A673 (cell line): ENCODE measurements at regions of chr10 and their contacts with region 1.

Region 1: GRCh38 chr10:48215488-48216204 is 58.9 kb downstream of the FRMPD2 start:
- DNase-seq: peak; percentile 75
- H3K4me3 ChIP-seq: no peak overlapping the region
- H3K27ac ChIP-seq: no peak overlapping the region
- H3K4me1 ChIP-seq: peaks cover 5% of the 10 kb centered on the region
- H3K27me3 ChIP-seq: no peaks in the 10 kb centered on the region
- CTCF ChIP-seq: peak; percentile 89

Region 2: DNA sequence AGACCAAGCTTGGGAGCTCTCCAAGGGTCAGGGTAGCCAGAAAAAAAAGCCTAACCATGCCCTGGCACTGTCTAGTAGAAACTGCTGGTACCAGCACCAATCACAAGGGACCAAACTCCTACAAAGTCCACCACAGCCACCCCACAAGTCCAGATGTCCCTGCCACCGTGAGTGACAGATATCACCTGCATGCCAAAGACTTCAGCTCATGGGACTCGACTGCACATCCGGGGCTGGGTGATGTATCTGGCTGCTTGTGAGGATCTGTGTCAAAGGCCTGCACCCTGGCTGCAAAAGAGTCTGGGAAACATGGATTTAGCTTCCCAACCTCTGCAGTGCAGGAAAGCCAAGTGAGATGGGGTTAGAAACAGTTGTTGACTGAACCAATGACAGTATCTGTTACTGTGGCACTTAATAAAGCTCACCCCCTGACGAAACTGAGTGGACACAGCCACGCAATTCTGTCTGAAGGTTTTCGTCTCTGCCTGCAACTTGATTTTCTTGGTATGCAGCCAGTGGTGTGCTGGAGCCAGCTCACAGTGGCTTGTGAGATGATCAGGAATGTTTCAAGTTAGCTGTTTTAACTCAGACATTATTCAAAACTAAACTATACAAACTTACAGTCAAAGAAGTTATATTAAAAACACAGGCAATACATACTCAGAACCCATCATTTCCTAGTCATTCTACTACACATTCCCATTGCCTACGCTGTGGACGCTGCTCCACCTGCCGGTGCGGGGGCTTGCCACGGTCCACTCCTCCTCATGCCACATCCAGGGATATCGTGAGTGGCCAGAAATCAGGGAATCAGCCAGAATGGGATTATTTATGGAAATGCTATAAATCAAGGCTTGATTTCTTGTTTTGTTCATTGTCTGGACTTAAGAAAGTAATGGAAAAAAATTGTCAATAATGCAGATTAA is 840.8 kb before region 1 on chr10:
- CTCF ChIA-PET with region 1: no interaction called
- POLR2A ChIA-PET with region 1: no interaction called
- intact Hi-C with region 1: no loop called
- DNase-seq: no peak
- H3K4me3 ChIP-seq: no peak overlapping the region
- H3K27ac ChIP-seq: no peak overlapping the region
- H3K4me1 ChIP-seq: no peaks in the 10 kb centered on the region
- H3K27me3 ChIP-seq: peaks cover 37% of the 10 kb centered on the region
- CTCF ChIP-seq: no peak

Region 3: DNA sequence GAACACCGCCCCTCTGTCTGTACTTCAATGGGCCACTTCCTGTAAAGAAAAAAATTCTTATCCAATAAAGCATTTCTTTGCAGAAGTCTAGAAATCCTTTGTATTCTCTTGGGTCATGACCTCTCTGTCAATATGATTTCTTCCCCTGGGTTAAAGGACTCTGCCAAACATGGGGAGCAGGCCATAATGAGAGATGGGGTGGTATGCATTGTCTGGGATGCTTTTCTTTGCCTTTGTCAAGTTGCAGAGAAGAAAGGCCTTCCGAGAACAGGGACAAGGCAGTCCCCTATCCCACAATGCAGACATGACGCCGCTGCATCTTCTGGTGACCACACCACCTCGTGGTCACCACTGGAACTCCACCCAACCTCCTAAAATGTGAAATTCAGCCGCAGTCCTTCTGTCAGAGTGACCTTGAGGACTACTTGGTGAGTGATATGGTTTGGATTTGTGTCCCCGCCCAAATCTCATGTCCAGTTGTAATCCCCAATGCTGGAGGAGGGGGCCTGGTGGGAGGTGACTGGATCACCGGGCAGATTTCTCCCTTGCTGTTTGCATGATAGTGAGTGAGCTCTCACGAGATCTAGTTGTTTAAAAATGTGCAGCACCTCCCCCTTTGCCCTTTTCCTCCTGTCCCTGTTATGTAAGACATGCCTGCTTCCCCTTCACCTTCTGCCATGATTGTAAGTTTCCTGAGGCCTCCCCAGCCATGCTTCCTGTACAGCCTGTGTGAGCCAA is 74.0 kb after region 1 on chr10:
- CTCF ChIA-PET with region 1: interaction called, 6 read pairs
- POLR2A ChIA-PET with region 1: no interaction called
- intact Hi-C with region 1: loop called (anchors 1 kb)
- DNase-seq: peak; percentile 72
- H3K4me3 ChIP-seq: no peak overlapping the region
- H3K27ac ChIP-seq: no peak overlapping the region
- H3K4me1 ChIP-seq: peaks cover 4% of the 10 kb centered on the region
- H3K27me3 ChIP-seq: no peaks in the 10 kb centered on the region
- CTCF ChIP-seq: peak; percentile 80